ENCODE measurements at regions of chr10 and their contacts with region 1.

Region 1: DNA sequence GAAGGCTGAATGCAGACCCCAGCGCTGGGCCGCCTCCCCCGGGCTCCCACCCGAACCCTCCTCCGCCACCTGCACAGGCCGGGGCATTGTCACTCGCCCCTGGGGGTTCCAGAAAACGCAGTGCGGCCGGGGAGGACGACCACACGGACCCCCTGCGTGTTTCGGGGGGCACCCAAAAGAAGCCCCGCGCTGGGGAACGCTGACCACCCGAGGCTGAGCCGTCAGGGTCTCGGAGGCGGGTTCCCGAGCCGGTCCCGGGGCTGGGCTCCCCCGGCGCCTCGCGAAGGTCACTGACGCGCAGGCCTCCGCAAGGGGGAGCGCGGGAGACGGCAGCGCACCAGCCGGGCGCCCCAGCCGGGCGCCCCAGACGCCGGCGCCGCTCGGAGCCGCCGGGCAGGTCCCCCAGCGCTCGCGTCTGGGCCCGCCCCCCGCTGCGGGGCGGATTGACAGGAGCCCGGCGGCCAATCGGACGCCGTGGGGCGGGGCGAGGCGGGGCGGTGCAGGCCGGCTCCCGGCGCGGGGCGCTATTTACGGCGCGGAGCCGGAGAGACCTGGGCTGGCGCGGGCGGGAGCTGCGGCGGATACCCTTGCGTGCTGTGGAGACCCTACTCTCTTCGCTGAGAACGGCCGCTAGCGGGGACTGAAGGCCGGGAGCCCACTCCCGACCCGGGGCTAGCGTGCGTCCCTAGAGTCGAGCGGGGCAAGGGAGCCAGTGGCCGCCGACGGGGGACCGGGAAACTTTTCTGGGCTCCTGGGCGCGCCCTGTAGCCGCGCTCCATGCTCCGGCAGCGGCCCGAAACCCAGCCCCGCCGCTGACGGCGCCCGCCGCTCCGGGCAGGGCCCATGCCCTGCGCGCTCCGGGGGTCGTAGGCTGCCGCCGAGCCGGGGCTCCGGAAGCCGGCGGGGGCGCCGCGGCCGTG is at the start of gene BAMBI:
- DNase-seq: peak; percentile 81
- ATAC-seq: peak; percentile 93
- H3K4me3 ChIP-seq: peak within 1 kb of the TSS; percentile 93 to 99 (median 99)
- H3K27ac ChIP-seq: peak within 1 kb of the TSS; percentile 71
- H3K4me1 ChIP-seq: peaks cover 30% of the 10 kb centered on the region
- H3K27me3 ChIP-seq: peaks cover 0 to 31% of the 10 kb centered on the region in 2 experiments; a peak in 4 of 5 replicates
- CTCF ChIP-seq: peak; percentile 73
- EP300 ChIP-seq: peak in 1 of 2 experiments; percentile 5; a peak in 1 of 4 replicates
- POLR2A ChIP-seq: peak; percentile 97 to 98
- RAD21 ChIP-seq: peak; percentile 97
- total RNA-seq, gene BAMBI: 13.2 and 23.6 TPM in 2 replicates

Region 2: DNA sequence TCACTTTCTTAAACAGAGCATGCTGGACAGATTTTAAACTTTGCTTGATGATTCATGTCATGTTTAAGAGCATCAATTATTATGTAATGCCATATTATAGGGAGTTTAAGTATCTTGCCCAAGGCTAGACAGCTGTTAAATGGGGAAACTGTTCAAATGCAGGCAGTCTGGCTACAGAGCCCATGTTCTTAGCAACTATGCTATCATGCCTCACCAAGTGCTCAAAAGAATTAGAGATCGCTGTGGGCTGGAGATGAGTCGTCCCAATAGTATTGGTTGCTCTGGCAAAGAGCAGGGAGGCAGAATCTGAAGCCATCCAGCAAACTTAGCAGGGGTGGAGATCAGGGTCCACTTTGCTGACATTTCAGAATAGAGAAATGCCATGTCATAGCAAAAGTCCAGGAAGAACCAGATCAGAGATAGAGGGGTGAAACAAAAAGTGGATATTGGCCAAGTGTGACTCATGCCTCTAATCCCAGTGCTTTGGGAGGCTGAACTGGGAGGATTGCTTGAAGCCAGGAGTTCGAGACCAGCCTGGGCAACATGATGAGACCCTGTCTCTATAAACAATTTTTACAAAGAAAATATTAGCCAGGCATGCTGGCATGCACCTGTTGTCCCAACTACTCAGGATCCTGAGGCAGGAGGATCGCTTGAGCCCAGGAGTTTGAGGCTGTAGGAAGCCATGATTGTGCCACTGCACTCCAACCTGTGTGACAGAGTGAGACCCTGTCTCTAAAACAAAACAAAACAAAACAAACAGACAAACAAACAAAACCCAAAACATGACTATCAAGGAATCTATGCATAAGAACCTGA is 57.9 kb after region 1 on chr10:
- CTCF ChIA-PET with region 1: no interaction called
- POLR2A ChIA-PET with region 1: no interaction called
- in situ Hi-C with region 1: no loop called
- intact Hi-C with region 1: loop called (anchors 10 kb)
- DNase-seq: peak; percentile 95
- ATAC-seq: peak; percentile 97
- H3K4me3 ChIP-seq: no peak overlapping the region
- H3K27ac ChIP-seq: no peak overlapping the region
- H3K4me1 ChIP-seq: peaks cover 33% of the 10 kb centered on the region
- H3K27me3 ChIP-seq: no peaks in the 10 kb centered on the region; a peak in 1 of 5 replicates
- CTCF ChIP-seq: no peak
- EP300 ChIP-seq: no peak; a peak in 1 of 4 replicates
- POLR2A ChIP-seq: no peak
- RAD21 ChIP-seq: no peak

Region 3: DNA sequence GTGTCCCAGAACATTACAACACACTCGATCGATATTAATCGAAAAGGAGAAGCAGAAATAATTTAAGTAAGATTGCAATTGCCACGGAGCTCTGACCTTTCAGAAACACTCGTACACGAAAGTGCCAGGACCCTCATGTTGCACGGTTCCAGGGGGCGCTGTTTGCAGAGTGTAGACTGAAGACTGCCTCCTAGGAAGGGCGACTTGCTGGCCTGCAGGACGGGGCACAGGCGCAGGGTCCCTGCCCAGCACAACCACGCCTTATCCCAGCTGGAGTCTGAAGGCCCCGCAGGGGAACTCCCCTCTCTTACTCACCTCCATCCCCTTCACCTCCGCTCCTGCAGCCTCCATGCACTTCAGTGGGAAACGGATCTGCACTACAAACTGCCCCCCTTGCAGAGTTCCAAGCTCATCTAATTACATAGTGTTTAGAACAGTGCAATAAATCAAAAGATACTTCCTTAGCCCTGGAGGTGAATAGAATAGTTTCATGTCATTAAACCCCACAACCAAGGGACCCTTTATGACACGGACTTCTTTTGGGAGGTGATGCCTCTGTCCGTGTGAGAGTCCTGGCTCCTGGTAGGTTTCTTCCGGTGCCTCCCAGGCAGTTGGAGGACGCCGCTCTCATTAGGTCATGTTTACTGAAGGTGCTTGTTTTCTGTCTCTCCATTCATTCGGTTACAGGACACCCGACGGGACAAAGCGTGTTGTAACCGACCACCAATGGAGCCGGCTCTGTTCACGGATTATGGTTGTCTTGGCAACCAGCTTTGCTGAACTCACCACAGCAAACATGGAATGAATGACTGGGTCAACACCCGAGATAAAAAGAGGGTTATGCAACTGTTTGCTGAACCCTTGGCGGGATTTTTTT is 262.3 kb after region 1 on chr10:
- CTCF ChIA-PET with region 1: no interaction called
- POLR2A ChIA-PET with region 1: interaction called, 4 read pairs
- in situ Hi-C with region 1: no loop called
- intact Hi-C with region 1: loop called (anchors 1 kb)
- DNase-seq: peak; percentile 100
- ATAC-seq: peak; percentile 97
- H3K4me3 ChIP-seq: peak overlapping the region; percentile 53 to 80 (median 67)
- H3K27ac ChIP-seq: peak overlapping the region; percentile 99
- H3K4me1 ChIP-seq: peaks cover 56% of the 10 kb centered on the region
- H3K27me3 ChIP-seq: no peaks in the 10 kb centered on the region; a peak in 1 of 5 replicates
- CTCF ChIP-seq: peak; percentile 92
- EP300 ChIP-seq: peak; percentile 99 to 100
- POLR2A ChIP-seq: peak; percentile 66 to 85
- RAD21 ChIP-seq: peak; percentile 60

Measured in HepG2 (cell line).